GM12878 (cell line): ENCODE measurements at regions of chr1 and their contacts with region 1.

Region 1: GRCh38 chr1:53919675-53920066 is 25.7 kb downstream of the DIO1 start:
- DNase-seq: no peak
- ATAC-seq: no peak
- H3K4me3 ChIP-seq: no peak overlapping the region
- H3K27ac ChIP-seq: no peak overlapping the region
- H3K4me1 ChIP-seq: no peaks in the 10 kb centered on the region
- H3K27me3 ChIP-seq: no peaks in the 10 kb centered on the region
- CTCF ChIP-seq: no peak
- EP300 ChIP-seq: no peak
- POLR2A ChIP-seq: no peak
- RAD21 ChIP-seq: no peak

Region 2: DNA sequence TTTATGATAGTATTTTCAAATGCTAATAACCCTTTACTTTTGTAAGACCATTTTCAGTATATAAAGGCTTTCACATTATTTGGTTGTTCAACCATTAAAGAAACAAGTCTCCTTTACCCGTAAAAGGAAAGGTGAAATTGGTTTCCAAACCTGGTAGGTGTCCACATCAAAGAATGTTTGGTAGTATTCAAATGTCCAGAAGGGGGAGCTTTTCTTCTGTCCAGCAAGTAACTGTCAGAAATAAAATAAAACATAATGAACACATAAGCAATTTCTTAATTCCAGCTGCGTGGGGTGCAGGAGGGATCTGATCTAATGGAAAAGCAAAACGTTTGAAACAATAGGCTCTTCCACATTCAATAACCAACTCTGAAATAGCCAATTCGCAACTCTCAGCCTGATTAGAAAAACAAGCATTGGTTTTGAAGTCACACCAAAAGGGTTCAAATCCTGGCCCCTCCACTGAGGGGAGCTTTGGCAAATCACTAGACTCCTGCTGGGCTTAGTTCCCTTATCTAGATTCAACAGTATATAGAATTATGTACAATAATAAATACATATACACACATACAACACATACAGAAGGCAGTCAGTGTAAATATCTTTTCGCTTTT is 41.1 kb before region 1 on chr1:
- CTCF ChIA-PET with region 1: interaction called, 4 read pairs
- POLR2A ChIA-PET with region 1: interaction called, 7 read pairs
- RAD21 ChIA-PET with region 1: no interaction called
- SMC1A ChIA-PET with region 1: interaction called, 15 read pairs
- in situ Hi-C with region 1: no loop called
- intact Hi-C with region 1: no loop called
- DNase-seq: no peak
- ATAC-seq: peak; percentile 60; the same call in 2 of the 3 replicates
- H3K4me3 ChIP-seq: no peak overlapping the region
- H3K27ac ChIP-seq: no peak overlapping the region
- H3K4me1 ChIP-seq: no peaks in the 10 kb centered on the region
- H3K27me3 ChIP-seq: no peaks in the 10 kb centered on the region
- CTCF ChIP-seq: peak; percentile 48 to 55 (median 54)
- EP300 ChIP-seq: no peak
- POLR2A ChIP-seq: no peak
- RAD21 ChIP-seq: peak; percentile 67

Region 3: DNA sequence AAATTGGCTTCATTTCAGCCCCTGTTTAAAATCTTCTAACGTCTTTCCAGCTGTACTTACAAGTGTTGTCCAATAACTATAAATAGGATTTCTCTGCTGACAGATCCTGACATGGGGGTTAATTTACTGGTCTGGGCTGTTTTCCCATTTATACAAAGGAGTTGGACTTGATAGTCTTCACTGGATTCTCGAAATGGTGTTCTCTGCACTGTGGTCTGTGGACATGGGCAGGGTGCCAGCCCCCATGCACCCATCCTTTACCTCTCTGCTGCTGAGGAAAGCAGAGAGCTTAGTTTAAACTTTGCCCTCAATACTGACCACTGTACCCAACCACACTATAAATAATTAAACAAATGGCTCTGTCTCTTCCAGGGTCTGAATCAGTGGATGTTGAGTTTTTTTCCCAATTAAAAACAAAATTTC is 20.5 kb before region 1 on chr1:
- CTCF ChIA-PET with region 1: no interaction called
- POLR2A ChIA-PET with region 1: interaction called, 10 read pairs
- RAD21 ChIA-PET with region 1: no interaction called
- SMC1A ChIA-PET with region 1: interaction called, 13 read pairs
- in situ Hi-C with region 1: no loop called
- intact Hi-C with region 1: no loop called
- DNase-seq: no peak
- ATAC-seq: peak; percentile 48; the same call in 2 of the 3 replicates
- H3K4me3 ChIP-seq: no peak overlapping the region
- H3K27ac ChIP-seq: no peak overlapping the region
- H3K4me1 ChIP-seq: no peaks in the 10 kb centered on the region
- H3K27me3 ChIP-seq: no peaks in the 10 kb centered on the region
- CTCF ChIP-seq: no peak
- EP300 ChIP-seq: no peak
- POLR2A ChIP-seq: no peak
- RAD21 ChIP-seq: no peak

Region 4: GRCh38 chr1:54047384-54048305 is 128.0 kb after region 1 on chr1:
- CTCF ChIA-PET with region 1: no interaction called
- POLR2A ChIA-PET with region 1: no interaction called
- RAD21 ChIA-PET with region 1: no interaction called
- SMC1A ChIA-PET with region 1: no interaction called
- in situ Hi-C with region 1: no loop called
- intact Hi-C with region 1: no loop called
- DNase-seq: no peak
- ATAC-seq: peak; percentile 67
- H3K4me3 ChIP-seq: peak overlapping the region; percentile 39; the same call in 1 of the 2 replicates
- H3K27ac ChIP-seq: peak overlapping the region; percentile 50
- H3K4me1 ChIP-seq: peaks cover 18% of the 10 kb centered on the region
- H3K27me3 ChIP-seq: no peaks in the 10 kb centered on the region
- CTCF ChIP-seq: no peak
- EP300 ChIP-seq: no peak
- POLR2A ChIP-seq: no peak
- RAD21 ChIP-seq: no peak